ENCODE measurements at regions of chr3 and their contacts with region 1.

Region 1: DNA sequence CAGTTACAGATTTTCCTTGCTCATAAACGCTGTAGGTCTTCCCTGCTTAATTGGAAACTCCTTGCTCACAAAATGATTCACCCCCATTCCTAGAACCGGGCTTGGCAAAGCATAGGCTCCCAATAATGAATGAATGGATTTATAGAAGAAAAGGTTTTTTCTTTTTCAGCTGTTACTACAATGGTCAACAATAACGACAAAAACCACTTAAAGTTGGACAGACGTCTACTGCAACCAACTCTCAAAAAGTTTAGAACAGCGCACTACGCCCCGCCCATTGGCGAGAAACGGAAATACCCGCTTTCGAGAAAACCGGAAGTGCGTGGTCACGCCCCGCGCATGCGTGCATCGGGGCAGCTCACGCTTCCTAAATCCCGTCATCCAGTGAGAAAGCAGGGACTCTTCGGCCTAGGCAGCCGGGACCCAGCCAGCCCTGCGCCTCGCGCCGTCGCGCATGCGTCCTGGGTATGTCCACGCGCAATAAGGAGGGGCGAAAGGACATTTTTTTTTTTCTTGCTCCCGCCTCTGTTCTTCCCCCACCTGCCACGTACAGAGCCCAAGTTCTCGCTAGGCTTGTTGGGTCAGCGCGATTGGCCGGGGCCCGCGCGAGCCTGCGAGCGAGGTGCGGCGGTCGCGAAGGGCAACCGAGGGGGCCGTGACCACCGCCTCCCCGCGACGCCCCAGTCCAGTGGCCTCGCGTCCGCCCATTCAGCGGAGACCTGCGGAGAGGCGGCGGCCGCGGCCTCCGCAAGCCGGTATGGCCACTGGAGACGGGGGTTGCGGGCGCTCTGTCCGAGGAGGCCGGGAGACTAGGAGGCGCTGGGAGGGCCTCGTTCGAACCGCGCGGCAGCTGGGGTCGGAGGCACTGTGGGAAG is at the start of gene TFG:
- DNase-seq: peak; percentile 99
- H3K4me3 ChIP-seq: peak within 1 kb of the TSS; percentile 74 to 95 (median 84)
- H3K27ac ChIP-seq: peak within 1 kb of the TSS; percentile 97
- H3K4me1 ChIP-seq: peaks cover 0 to 34% (median 20%) of the 10 kb centered on the region in 4 donors
- H3K27me3 ChIP-seq: no peaks in the 10 kb centered on the region
- CTCF ChIP-seq: no peak
- EP300 ChIP-seq: peak in 1 of 4 donors; percentile 81
- POLR2A ChIP-seq: peak; percentile 47 to 53
- total RNA-seq, gene TFG: 52.0 to 64.9 (median 55.0) TPM

Region 2: GRCh38 chr3:100260685-100261484 is 448.3 kb before region 1 on chr3 and contains the start of gene TBC1D23:
- intact Hi-C with region 1: loop called (anchors 10 kb)
- DNase-seq: peak; percentile 100
- H3K4me3 ChIP-seq: peak within 1 kb of the TSS; percentile 81 to 100 (median 99)
- H3K27ac ChIP-seq: peak within 1 kb of the TSS; percentile 96 to 99 (median 96)
- H3K4me1 ChIP-seq: peaks cover 0 to 45% (median 42%) of the 10 kb centered on the region in 4 donors
- H3K27me3 ChIP-seq: no peaks in the 10 kb centered on the region
- CTCF ChIP-seq: no peak
- EP300 ChIP-seq: peak in 1 of 4 donors; percentile 82
- POLR2A ChIP-seq: peak; percentile 80 to 84
- total RNA-seq, gene TBC1D23: 31.3 to 34.9 (median 32.7) TPM

Region 3: GRCh38 chr3:100400780-100401673 is 308.2 kb before region 1 on chr3 and contains the starts of genes LNP1 and TOMM70:
- intact Hi-C with region 1: loop called (anchors 5 kb)
- DNase-seq: peak; percentile 98
- H3K4me3 ChIP-seq: peak within 1 kb of the TSS; percentile 77 to 99 (median 87)
- H3K27ac ChIP-seq: peak within 1 kb of the TSS; percentile 89 to 98 (median 91)
- H3K4me1 ChIP-seq: peaks cover 0 to 63% (median 38%) of the 10 kb centered on the region in 4 donors
- H3K27me3 ChIP-seq: no peaks in the 10 kb centered on the region
- CTCF ChIP-seq: no peak
- EP300 ChIP-seq: no peak
- POLR2A ChIP-seq: peak; percentile 69 to 72
- total RNA-seq, gene LNP1: 2.2 to 3.6 (median 3.1) TPM
- total RNA-seq, gene TOMM70: 49.6 to 54.9 (median 51.9) TPM

Region 4: GRCh38 chr3:100492059-100493006 is 216.9 kb before region 1 on chr3 and contains the start of gene TMEM45A:
- intact Hi-C with region 1: loop called (anchors 2 kb)
- DNase-seq: peak; percentile 97
- H3K4me3 ChIP-seq: peak within 1 kb of the TSS; percentile 51 to 64 (median 58)
- H3K27ac ChIP-seq: peak within 1 kb of the TSS; percentile 85 to 89 (median 88)
- H3K4me1 ChIP-seq: peaks cover 0 to 14% (median 7%) of the 10 kb centered on the region in 4 donors
- H3K27me3 ChIP-seq: no peaks in the 10 kb centered on the region
- CTCF ChIP-seq: no peak
- EP300 ChIP-seq: no peak
- POLR2A ChIP-seq: peak in 1 of 2 donors; percentile 23
- total RNA-seq, gene TMEM45A: 12.2 to 23.9 (median 15.7) TPM

Region 5: GRCh38 chr3:101561630-101562328 is 852.6 kb after region 1 on chr3 and contains the start of gene TRMT10C:
- intact Hi-C with region 1: loop called (anchors 5 kb)
- DNase-seq: peak; percentile 95
- H3K4me3 ChIP-seq: peak within 1 kb of the TSS; percentile 47 to 74 (median 70)
- H3K27ac ChIP-seq: peak within 1 kb of the TSS; percentile 85 to 90 (median 87)
- H3K4me1 ChIP-seq: peaks cover 0 to 27% (median 16%) of the 10 kb centered on the region in 4 donors
- H3K27me3 ChIP-seq: peaks cover 0 to 27% (median 0%) of the 10 kb centered on the region in 3 donors
- CTCF ChIP-seq: no peak
- EP300 ChIP-seq: no peak
- POLR2A ChIP-seq: peak; percentile 77 to 84
- total RNA-seq, gene TRMT10C: 15.5 to 29.1 (median 19.2) TPM

Region 6: GRCh38 chr3:101676765-101677435 is 967.7 kb after region 1 on chr3 and contains the start of gene ZBTB11:
- intact Hi-C with region 1: loop called (anchors 10 kb)
- DNase-seq: peak; percentile 100
- H3K4me3 ChIP-seq: peak within 1 kb of the TSS; percentile 86 to 98 (median 93)
- H3K27ac ChIP-seq: peak within 1 kb of the TSS; percentile 96 to 99 (median 98)
- H3K4me1 ChIP-seq: peaks cover 0 to 30% (median 17%) of the 10 kb centered on the region in 4 donors
- H3K27me3 ChIP-seq: no peaks in the 10 kb centered on the region
- CTCF ChIP-seq: peak in 2 of 4 experiments; percentile 26 to 42
- EP300 ChIP-seq: peak in 2 of 4 donors; percentile 37 to 47
- POLR2A ChIP-seq: peak; percentile 90 to 91
- total RNA-seq, gene ZBTB11: 18.6 to 24.4 (median 21.5) TPM